CD8-positive, alpha-beta T cell (primary cell): ENCODE measurements at regions of chr6 and their contacts with region 1.

Region 1: GRCh38 chr6:47674673-47675072 is 23.7 kb upstream of the ADGRF4 start:
- DNase-seq: no peak
- ATAC-seq: no peak
- H3K4me3 ChIP-seq: no peak overlapping the region
- H3K4me3 Mint-ChIP-seq: no peak overlapping the region
- H3K27ac ChIP-seq: no peak overlapping the region
- H3K27ac Mint-ChIP-seq: no peak overlapping the region
- H3K4me1 ChIP-seq: no peaks in the 10 kb centered on the region
- H3K4me1 Mint-ChIP-seq: no peaks in the 10 kb centered on the region
- H3K27me3 ChIP-seq: no peaks in the 10 kb centered on the region
- H3K27me3 Mint-ChIP-seq: peaks cover 5% of the 10 kb centered on the region
- CTCF ChIP-seq: no peak

Region 2: DNA sequence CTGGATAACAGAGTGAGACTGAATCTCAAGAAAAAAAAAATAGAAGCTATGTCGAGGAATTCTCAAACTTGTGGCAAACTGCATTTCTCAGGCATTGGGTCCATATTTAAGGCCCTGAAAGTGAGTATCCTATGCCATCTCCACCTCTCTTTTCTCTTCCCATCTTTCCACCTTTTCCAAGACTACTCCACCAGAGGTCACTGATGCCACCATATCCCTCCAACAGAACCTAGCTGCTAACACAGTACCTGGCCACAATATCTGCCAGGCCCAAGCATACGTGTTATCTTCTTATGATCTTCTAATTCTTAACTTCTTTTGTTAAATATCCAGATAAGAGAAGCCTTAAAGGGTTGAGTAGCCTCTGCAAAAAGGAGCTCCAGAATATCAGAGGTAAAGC is 15.5 kb after region 1 on chr6:
- CTCF ChIA-PET with region 1: no interaction called
- POLR2A ChIA-PET with region 1: no interaction called
- intact Hi-C with region 1: loop called in 1 of 2 experiments (anchors 2 kb)
- DNase-seq: no peak
- ATAC-seq: no peak
- H3K4me3 ChIP-seq: no peak overlapping the region
- H3K4me3 Mint-ChIP-seq: no peak overlapping the region
- H3K27ac ChIP-seq: no peak overlapping the region
- H3K27ac Mint-ChIP-seq: no peak overlapping the region
- H3K4me1 ChIP-seq: no peaks in the 10 kb centered on the region
- H3K4me1 Mint-ChIP-seq: no peaks in the 10 kb centered on the region
- H3K27me3 ChIP-seq: peaks cover 0 to 2% of the 10 kb centered on the region in 2 experiments
- H3K27me3 Mint-ChIP-seq: peaks cover 2% of the 10 kb centered on the region
- CTCF ChIP-seq: no peak